Dorsolateral prefrontal cortex (tissue), 120 donors: ENCODE measurements at regions of chr17 and their contacts with region 1.

Region 1: GRCh38 chr17:36486204-36487194 is at the start of gene ZNHIT3:
- DNase-seq: peak; percentile 84 to 95 (median 93)
- H3K4me3 ChIP-seq: peak within 1 kb of the TSS; percentile 72 to 100 (median 96)
- H3K27ac ChIP-seq: peak within 1 kb of the TSS in 51 of 59 donors; percentile 10 to 89 (median 77)
- H3K27me3 ChIP-seq: no peaks in the 10 kb centered on the region
- CTCF ChIP-seq: peak in 37 of 56 donors; percentile 7 to 62 (median 36)
- total RNA-seq, gene ZNHIT3: 26.6 to 61.2 (median 43.9) TPM

Region 2: DNA sequence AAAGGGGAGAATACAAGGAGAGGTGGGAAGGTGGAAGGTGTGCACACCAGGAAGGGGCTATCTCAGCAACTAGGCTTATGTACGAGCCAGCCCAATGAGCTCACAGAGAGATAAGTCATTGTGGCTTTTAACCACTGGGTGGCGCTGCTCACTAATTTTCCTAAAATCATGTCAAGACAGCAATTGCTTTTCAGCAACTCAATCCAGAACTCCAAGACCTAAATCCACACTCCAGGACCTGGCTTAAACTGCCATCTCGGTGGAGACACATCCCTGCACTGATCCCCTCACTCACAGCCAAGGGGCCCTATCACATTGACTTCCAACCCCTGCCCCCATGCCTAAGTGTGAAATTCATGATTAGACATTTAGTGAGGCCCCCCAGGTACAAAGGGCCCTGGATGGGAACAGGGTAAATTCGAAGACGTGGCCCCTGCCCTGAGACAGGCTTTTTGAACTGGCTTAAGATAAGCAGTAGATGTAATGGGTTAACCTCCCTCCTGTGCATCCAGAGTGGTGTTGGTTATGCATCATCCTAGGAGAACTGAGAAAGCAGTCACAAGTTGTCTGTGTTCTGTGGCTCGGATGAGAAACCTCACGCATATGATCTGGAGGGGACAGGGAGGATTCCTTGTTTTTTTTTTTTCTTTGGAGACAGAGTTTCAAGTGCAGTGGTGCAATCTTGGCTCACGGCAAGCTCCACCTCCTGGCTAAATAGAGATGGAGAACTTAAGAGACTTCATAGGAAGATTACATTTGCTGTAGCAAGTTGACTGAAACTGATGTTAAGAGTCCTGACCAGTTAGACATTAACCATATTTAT is 516.7 kb before region 1 on chr17:
- intact Hi-C with region 1: loop called (anchors 2 to 5 kb)
- DNase-seq: peak in 9 of 10 donors; percentile 30 to 91 (median 76)
- H3K4me3 ChIP-seq: no peak overlapping the region
- H3K27ac ChIP-seq: no peak overlapping the region
- H3K27me3 ChIP-seq: no peaks in the 10 kb centered on the region
- CTCF ChIP-seq: peak; percentile 71 to 98 (median 87)

Region 3: GRCh38 chr17:36591434-36592315 is 105.2 kb after region 1 on chr17 and contains the start of gene DHRS11:
- intact Hi-C with region 1: loop called in 1 of 2 experiments (anchors 5 kb)
- DNase-seq: peak; percentile 68 to 91 (median 80)
- H3K4me3 ChIP-seq: peak within 1 kb of the TSS; percentile 62 to 98 (median 85)
- H3K27ac ChIP-seq: peak within 1 kb of the TSS in 54 of 59 donors; percentile 3 to 86 (median 62)
- H3K27me3 ChIP-seq: no peaks in the 10 kb centered on the region
- CTCF ChIP-seq: peak in 31 of 56 donors; percentile 7 to 52 (median 28)
- total RNA-seq, gene DHRS11: 12.5 to 49.2 (median 28.7) TPM